ENCODE measurements at regions of chr18 and their contacts with region 1.

Region 1: DNA sequence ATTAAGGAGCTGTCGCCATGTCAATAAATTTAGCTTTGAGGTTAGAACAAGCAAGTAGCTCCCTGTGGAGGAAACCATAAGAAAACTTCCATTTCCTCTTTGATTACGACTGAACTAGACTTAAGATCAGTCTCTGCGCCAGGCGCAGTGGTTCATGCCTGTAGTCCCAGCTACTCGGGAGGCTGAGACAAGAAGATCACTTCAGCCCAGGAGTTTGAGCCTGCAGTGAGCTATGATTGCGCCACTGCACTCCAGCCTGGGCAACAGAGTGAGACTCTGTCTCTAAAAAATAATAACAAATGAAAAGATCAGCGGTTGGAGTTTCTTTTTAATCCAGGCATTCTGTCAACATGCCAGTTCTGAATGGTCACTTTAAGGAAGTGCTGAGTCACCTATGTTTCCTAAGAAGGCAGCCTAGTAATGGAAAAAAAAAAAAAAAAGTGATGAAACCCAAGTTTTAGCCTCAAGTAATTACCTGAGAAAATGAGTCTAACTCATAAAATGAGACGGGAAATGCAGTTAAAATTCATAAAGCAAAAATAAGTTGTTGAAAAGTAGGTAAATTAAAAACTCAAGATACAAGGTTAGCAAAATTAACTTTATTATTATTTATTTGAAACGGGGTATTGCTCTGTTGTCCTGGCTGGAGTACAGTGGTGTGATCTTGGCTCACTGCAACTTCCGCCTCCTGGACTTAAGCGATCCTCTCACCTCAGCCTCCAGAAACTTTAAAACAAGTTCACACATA is 10.2 kb downstream of the C18orf32 start:
- DNase-seq: peak; percentile 89
- H3K4me3 ChIP-seq: peak overlapping the region in 2 of 3 experiments; percentile 48 to 58
- H3K27ac ChIP-seq: peak overlapping the region; percentile 86
- H3K4me1 ChIP-seq: peaks cover 15% of the 10 kb centered on the region
- H3K27me3 ChIP-seq: no peaks in the 10 kb centered on the region
- CTCF ChIP-seq: no peak
- POLR2A ChIP-seq: no peak

Region 2: DNA sequence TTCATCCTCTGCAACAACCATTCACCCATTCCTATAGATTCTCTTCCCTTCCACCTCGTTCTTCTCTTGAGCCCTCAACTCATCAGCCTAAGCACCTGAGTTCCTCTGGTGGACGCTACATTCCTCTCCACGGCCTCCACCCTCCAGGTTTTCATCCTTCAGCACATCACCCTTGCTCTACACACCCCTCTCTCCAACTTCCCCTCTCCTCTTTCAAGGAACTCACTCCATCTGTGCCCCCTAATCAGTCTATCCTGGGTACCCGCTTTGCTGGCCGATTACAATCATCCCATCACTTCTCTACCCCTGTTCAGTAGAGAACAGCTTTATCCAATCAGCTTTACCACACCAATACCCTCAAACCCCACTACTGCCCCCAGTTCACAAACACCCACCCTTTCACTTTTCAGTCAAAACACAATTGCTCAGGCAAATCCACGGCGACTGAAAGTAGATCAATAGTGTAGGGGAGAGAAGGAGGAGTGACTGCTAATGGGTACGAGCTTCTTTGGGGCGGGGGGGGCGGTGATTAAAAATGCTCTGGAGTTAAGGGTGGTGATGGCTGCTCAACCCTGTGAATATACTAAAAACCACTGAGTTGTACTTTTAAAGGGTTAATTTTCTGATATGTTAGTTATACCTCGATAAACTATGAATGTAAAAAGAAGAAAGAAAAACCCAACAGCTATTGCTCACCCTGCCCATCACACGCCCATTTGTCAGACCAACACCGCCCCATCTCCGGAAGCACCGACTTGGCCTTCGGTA is 17.2 kb before region 1 on chr18:
- CTCF ChIA-PET with region 1: interaction called, 8 read pairs
- POLR2A ChIA-PET with region 1: interaction called, 3 read pairs
- dilution Hi-C with region 1: no loop called
- intact Hi-C with region 1: loop called (anchors 2 kb)
- DNase-seq: peak; percentile 8
- H3K4me3 ChIP-seq: peak overlapping the region; percentile 57 to 99 (median 87)
- H3K27ac ChIP-seq: peak overlapping the region; percentile 49
- H3K4me1 ChIP-seq: peaks cover 18% of the 10 kb centered on the region
- H3K27me3 ChIP-seq: no peaks in the 10 kb centered on the region
- CTCF ChIP-seq: no peak
- POLR2A ChIP-seq: no peak

Region 3: DNA sequence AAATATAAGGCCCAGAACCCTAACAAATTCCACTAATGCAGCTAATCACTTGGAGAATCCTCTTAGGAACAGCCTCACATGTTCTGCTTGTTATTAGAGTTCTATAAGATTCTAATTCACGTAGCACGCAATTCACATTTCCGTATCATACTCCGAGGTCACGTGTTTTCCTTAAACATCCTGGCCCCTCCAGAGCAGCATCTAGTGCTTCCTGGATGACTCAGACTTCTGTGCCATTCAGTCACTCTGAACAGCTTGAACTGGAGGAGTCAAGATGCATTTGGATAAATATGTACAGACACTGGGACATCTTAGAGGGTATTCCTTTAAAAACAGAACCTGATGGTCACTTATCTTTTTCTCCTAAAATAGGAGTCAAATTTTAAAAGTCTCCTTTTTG is 561.6 kb after region 1 on chr18:
- CTCF ChIA-PET with region 1: no interaction called
- POLR2A ChIA-PET with region 1: no interaction called
- dilution Hi-C with region 1: no loop called
- intact Hi-C with region 1: no loop called
- DNase-seq: peak; percentile 63
- H3K4me3 ChIP-seq: no peak overlapping the region
- H3K27ac ChIP-seq: no peak overlapping the region
- H3K4me1 ChIP-seq: peaks cover 10% of the 10 kb centered on the region
- H3K27me3 ChIP-seq: peaks cover 0 to 5% of the 10 kb centered on the region in 2 experiments
- CTCF ChIP-seq: no peak
- POLR2A ChIP-seq: no peak